GM10248 (cell line): ENCODE measurements at regions of chr1 and their contacts with region 1.

Region 1: GRCh38 chr1:170692866-170693575 is 29.1 kb downstream of the PRRX1 start:
- DNase-seq: no peak
- CTCF ChIP-seq: no peak

Region 2: GRCh38 chr1:170670802-170671628 is 22.0 kb before region 1 on chr1:
- CTCF ChIA-PET with region 1: interaction called, 18 read pairs
- POLR2A ChIA-PET with region 1: no interaction called
- DNase-seq: no peak
- CTCF ChIP-seq: peak; percentile 48

Region 3: GRCh38 chr1:170711682-170712081 is 18.7 kb after region 1 on chr1:
- CTCF ChIA-PET with region 1: interaction called, 11 read pairs
- POLR2A ChIA-PET with region 1: no interaction called
- DNase-seq: no peak
- CTCF ChIP-seq: no peak

Region 4: GRCh38 chr1:170881268-170882265 is 188.5 kb after region 1 on chr1:
- CTCF ChIA-PET with region 1: interaction called, 49 read pairs
- POLR2A ChIA-PET with region 1: no interaction called
- DNase-seq: no peak
- CTCF ChIP-seq: peak; percentile 57

Region 5: GRCh38 chr1:170929835-170930554 is 237.0 kb after region 1 on chr1:
- CTCF ChIA-PET with region 1: interaction called, 16 read pairs
- POLR2A ChIA-PET with region 1: no interaction called
- DNase-seq: peak; percentile 58
- CTCF ChIP-seq: peak; percentile 73